ENCODE measurements at regions of chr15 and their contacts with region 1.

Region 1: GRCh38 chr15:101008158-101009139 is 89.3 kb downstream of the LRRK1 start:
- DNase-seq: peak; percentile 81
- H3K4me3 Mint-ChIP-seq: peak overlapping the region; percentile 72
- H3K27ac Mint-ChIP-seq: no peak overlapping the region
- H3K4me1 Mint-ChIP-seq: peaks cover 11% of the 10 kb centered on the region
- H3K27me3 Mint-ChIP-seq: no peaks in the 10 kb centered on the region
- CTCF ChIP-seq: peak; percentile 93

Region 2: GRCh38 chr15:100349696-100350433 is 658.6 kb before region 1 on chr15:
- CTCF ChIA-PET with region 1: interaction called, 4 read pairs
- POLR2A ChIA-PET with region 1: no interaction called
- intact Hi-C with region 1: loop called (anchors 5 kb)
- DNase-seq: peak; percentile 93
- H3K4me3 Mint-ChIP-seq: peak overlapping the region; percentile 86
- H3K27ac Mint-ChIP-seq: peak overlapping the region; percentile 94
- H3K4me1 Mint-ChIP-seq: peaks cover 12% of the 10 kb centered on the region
- H3K27me3 Mint-ChIP-seq: no peaks in the 10 kb centered on the region
- CTCF ChIP-seq: peak; percentile 78

Region 3: DNA sequence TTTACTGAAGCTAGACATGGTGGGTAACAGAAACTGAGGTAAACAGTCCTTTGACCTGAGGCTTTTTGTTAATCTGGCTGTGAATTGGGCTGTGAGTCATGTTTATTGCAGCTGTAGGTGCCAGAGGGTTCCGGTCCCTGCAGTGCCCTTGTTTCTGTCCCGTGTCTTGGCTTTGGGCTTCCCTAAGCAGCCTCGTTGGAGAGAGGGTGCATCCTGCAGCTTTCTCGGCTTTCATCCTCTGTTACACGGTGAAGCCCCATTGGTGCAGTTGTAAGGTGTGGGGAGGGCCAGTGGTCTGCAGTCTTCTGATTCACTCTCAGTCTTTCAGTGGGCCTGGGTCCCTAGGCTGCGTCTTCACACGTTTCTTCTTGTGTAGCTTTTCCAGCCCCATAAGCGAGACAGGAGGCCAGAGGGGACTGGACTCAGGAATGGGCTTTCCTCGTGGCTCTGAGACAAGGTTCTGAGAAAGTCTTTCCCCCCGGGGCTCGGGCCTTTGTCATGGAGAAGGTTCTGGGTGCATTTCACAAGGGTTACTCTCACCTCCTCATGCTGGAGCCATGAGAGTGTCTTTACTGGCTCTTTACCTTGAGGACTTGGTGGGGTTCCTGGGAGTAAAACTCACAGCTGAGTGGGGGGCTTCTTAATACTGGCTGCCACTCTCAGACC is 372.9 kb before region 1 on chr15:
- CTCF ChIA-PET with region 1: interaction called, 24 read pairs
- POLR2A ChIA-PET with region 1: no interaction called
- intact Hi-C with region 1: no loop called
- DNase-seq: peak; percentile 67
- H3K4me3 Mint-ChIP-seq: no peak overlapping the region
- H3K27ac Mint-ChIP-seq: peak overlapping the region; percentile 65
- H3K4me1 Mint-ChIP-seq: peaks cover 18% of the 10 kb centered on the region
- H3K27me3 Mint-ChIP-seq: no peaks in the 10 kb centered on the region
- CTCF ChIP-seq: no peak

Region 4: GRCh38 chr15:101024073-101024695 is 15.7 kb after region 1 on chr15:
- CTCF ChIA-PET with region 1: interaction called, 23 read pairs
- POLR2A ChIA-PET with region 1: no interaction called
- intact Hi-C with region 1: no loop called
- DNase-seq: no peak
- H3K4me3 Mint-ChIP-seq: no peak overlapping the region
- H3K27ac Mint-ChIP-seq: peak overlapping the region; percentile 36
- H3K4me1 Mint-ChIP-seq: peaks cover 6% of the 10 kb centered on the region
- H3K27me3 Mint-ChIP-seq: no peaks in the 10 kb centered on the region
- CTCF ChIP-seq: no peak

Region 5: DNA sequence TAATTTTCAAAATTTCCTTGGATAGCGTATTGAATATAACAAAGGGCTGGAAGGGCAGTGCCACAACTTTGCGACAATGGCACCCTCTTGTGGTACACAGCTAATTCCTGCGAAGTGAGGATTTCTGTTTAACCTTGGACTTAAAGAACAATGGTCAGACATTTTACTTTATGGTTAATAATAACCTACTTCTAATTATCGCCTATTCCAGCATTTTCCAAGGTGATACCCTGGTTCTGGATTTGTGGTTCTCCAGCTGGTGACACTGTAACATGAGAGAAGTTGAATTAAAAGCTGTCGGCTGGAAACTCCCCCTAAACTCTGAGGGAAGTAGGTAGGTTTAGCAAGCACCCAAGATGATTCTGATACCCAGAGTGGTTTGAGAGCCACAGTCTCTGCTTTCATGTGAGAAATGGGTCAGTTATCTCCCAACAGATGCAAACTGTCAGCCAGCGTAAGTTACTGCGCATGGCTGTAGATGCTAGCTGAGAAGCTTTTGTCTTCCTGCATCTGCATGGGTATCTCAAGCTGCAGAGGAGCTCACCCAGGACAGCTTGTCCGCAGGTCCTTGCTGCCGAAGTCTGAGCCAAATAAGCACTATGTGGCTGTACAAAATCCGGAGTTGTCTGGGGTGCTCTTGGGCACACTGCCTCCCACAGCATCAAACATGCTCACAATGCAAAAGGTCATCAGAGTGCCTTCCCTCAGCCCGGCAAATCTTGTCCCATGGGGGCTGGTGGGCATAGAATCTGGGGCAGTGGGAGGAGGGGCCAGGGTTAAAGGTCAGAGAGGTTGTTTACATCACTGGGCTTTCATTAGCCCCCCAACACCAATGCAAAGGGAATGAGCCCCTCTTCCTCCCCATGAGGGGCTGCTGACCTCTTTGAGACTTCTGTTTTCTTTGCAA is 250.0 kb after region 1 on chr15:
- CTCF ChIA-PET with region 1: interaction called, 46 read pairs
- POLR2A ChIA-PET with region 1: no interaction called
- intact Hi-C with region 1: no loop called
- DNase-seq: peak; percentile 77
- H3K4me3 Mint-ChIP-seq: no peak overlapping the region
- H3K27ac Mint-ChIP-seq: no peak overlapping the region
- H3K4me1 Mint-ChIP-seq: peaks cover 5% of the 10 kb centered on the region
- H3K27me3 Mint-ChIP-seq: no peaks in the 10 kb centered on the region
- CTCF ChIP-seq: peak; percentile 85

Measured in MCF 10A (cell line).